ENCODE measurements at regions of chr2 and their contacts with region 1.

Region 1: DNA sequence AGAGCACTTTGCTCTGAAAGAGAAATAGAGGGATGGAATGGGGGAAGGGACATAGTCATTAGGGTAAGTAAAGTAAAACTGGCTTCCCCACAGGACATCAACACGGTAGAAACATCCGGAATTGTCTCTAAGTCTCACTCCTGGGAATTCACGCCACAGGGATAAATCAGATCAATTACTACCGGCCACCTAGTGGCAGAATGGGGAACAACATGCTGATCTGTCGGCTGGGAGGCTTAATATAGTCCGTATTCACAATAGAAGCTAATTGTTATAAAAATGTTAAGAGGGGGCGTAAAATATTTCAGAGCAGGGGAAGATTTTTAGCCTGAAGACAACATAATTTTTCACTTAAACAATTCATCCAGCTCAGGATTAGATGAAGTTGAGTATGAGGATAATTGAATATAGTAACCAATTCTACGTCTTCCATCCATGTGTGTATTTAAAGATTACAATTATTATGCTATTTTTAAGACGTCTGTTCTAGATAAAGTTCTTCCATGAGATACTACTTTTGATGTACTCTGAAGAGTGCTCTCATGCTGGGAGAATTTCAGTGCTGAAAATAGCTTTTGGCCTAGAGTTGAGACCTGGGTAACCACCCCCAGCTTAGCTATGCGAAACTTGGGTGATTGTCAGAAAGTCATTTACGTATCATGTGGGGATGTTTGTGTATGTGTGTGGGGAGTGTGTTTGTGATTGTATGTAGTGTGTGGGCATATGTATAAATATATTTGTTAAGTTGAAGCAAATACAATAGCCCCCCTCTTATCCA is 65.7 kb downstream of the LRRTM1 start:
- DNase-seq: peak; percentile 59
- H3K4me3 Mint-ChIP-seq: no peak overlapping the region
- H3K27ac Mint-ChIP-seq: no peak overlapping the region
- H3K4me1 Mint-ChIP-seq: peaks cover 7% of the 10 kb centered on the region
- H3K27me3 Mint-ChIP-seq: no peaks in the 10 kb centered on the region
- CTCF ChIP-seq: peak; percentile 70

Region 2: GRCh38 chr2:79935771-79936657 is 302.9 kb before region 1 on chr2:
- CTCF ChIA-PET with region 1: interaction called, 15 read pairs
- POLR2A ChIA-PET with region 1: no interaction called
- intact Hi-C with region 1: loop called (anchors 5 kb)
- DNase-seq: peak; percentile 76
- H3K4me3 Mint-ChIP-seq: peak overlapping the region; percentile 69
- H3K27ac Mint-ChIP-seq: peak overlapping the region; percentile 37
- H3K4me1 Mint-ChIP-seq: peaks cover 11% of the 10 kb centered on the region
- H3K27me3 Mint-ChIP-seq: peaks cover 12% of the 10 kb centered on the region
- CTCF ChIP-seq: peak; percentile 65

Region 3: DNA sequence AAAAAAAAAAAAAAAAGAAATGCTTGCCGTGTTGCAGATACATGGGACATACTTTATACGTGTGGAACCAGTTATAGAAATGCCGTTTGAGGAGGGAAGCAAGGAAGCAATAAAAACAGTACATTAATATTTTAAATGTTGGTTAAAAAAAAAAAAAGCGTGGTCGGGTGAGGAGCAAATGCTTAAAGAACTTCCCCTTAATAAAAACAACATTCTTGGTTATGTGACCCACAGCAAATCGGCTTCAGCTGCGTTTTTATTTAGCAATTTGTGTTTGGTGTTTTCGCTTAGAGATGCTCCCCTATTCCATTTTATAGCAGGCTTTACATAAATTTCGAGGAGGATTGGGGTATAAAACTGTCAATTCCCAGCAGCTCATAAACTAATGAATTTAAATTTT is 157.9 kb before region 1 on chr2:
- CTCF ChIA-PET with region 1: interaction called, 11 read pairs
- POLR2A ChIA-PET with region 1: no interaction called
- intact Hi-C with region 1: loop called (anchors 1 kb)
- DNase-seq: no peak
- H3K4me3 Mint-ChIP-seq: no peak overlapping the region
- H3K27ac Mint-ChIP-seq: no peak overlapping the region
- H3K4me1 Mint-ChIP-seq: peaks cover 10% of the 10 kb centered on the region
- H3K27me3 Mint-ChIP-seq: no peaks in the 10 kb centered on the region
- CTCF ChIP-seq: no peak

Region 4: GRCh38 chr2:80086831-80087230 is 152.1 kb before region 1 on chr2:
- CTCF ChIA-PET with region 1: interaction called, 11 read pairs
- POLR2A ChIA-PET with region 1: no interaction called
- intact Hi-C with region 1: loop called (anchors 1 kb)
- DNase-seq: peak; percentile 56
- H3K4me3 Mint-ChIP-seq: no peak overlapping the region
- H3K27ac Mint-ChIP-seq: no peak overlapping the region
- H3K4me1 Mint-ChIP-seq: peaks cover 8% of the 10 kb centered on the region
- H3K27me3 Mint-ChIP-seq: no peaks in the 10 kb centered on the region
- CTCF ChIP-seq: no peak

Region 5: DNA sequence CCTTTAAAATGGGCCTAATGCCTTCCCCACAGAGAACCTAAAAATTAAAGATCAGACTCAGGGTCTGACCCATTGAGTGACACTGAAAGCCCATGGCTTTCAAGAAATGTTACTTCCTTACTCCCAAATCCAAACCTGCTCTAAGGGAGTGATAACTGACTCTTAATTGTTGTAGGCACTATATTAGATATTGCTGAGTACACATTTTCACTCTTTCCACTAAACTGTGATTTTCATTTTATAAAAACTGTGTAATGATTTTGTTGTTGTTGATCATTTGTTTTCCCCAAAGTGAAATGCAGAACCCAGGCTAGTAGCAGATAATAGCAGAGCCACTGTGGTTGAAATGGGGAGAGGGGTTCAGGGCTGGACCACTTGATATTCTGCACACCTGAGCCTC is 21.4 kb before region 1 on chr2:
- CTCF ChIA-PET with region 1: interaction called, 11 read pairs
- POLR2A ChIA-PET with region 1: no interaction called
- intact Hi-C with region 1: no loop called
- DNase-seq: no peak
- H3K4me3 Mint-ChIP-seq: no peak overlapping the region
- H3K27ac Mint-ChIP-seq: no peak overlapping the region
- H3K4me1 Mint-ChIP-seq: no peaks in the 10 kb centered on the region
- H3K27me3 Mint-ChIP-seq: no peaks in the 10 kb centered on the region
- CTCF ChIP-seq: no peak

Region 6: DNA sequence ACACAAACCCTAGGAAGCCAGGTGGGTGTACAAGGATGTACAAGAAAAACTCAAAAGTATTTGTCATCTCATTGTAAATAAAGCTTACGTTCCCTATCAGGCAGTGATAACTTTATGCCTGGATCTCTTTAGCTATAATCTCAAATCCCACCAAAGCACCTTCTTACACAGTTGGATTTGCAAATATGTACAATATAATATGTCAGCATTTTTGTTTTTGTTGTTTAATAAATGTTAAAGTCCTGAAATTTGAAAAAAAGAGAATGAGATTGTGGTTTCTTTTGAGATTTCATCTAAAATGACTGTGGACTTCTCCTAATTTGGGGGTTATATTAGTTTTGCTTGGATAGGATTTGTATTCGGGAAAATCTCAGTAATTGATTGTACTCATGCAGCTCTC is 16.2 kb before region 1 on chr2:
- CTCF ChIA-PET with region 1: interaction called, 39 read pairs
- POLR2A ChIA-PET with region 1: no interaction called
- intact Hi-C with region 1: no loop called
- DNase-seq: no peak
- H3K4me3 Mint-ChIP-seq: no peak overlapping the region
- H3K27ac Mint-ChIP-seq: no peak overlapping the region
- H3K4me1 Mint-ChIP-seq: no peaks in the 10 kb centered on the region
- H3K27me3 Mint-ChIP-seq: no peaks in the 10 kb centered on the region
- CTCF ChIP-seq: no peak

Region 7: GRCh38 chr2:80255918-80256781 is 17.3 kb after region 1 on chr2:
- CTCF ChIA-PET with region 1: interaction called, 14 read pairs
- POLR2A ChIA-PET with region 1: no interaction called
- intact Hi-C with region 1: no loop called
- DNase-seq: peak; percentile 52
- H3K4me3 Mint-ChIP-seq: no peak overlapping the region
- H3K27ac Mint-ChIP-seq: no peak overlapping the region
- H3K4me1 Mint-ChIP-seq: peaks cover 6% of the 10 kb centered on the region
- H3K27me3 Mint-ChIP-seq: no peaks in the 10 kb centered on the region
- CTCF ChIP-seq: peak; percentile 30

Region 8: GRCh38 chr2:80473796-80474195 is 234.9 kb after region 1 on chr2:
- CTCF ChIA-PET with region 1: no interaction called
- POLR2A ChIA-PET with region 1: no interaction called
- intact Hi-C with region 1: no loop called
- DNase-seq: no peak
- H3K4me3 Mint-ChIP-seq: no peak overlapping the region
- H3K27ac Mint-ChIP-seq: no peak overlapping the region
- H3K4me1 Mint-ChIP-seq: no peaks in the 10 kb centered on the region
- H3K27me3 Mint-ChIP-seq: no peaks in the 10 kb centered on the region
- CTCF ChIP-seq: no peak